GM12878 (cell line): ENCODE measurements at regions of chr20 and their contacts with region 1.

Region 1: GRCh38 chr20:53750827-53751619 is 157.4 kb upstream of the ZNF217 start:
- DNase-seq: peak; percentile 69
- ATAC-seq: peak; percentile 83
- H3K4me3 ChIP-seq: peak overlapping the region; percentile 2; the same call in 1 of the 2 replicates
- H3K27ac ChIP-seq: peak overlapping the region; percentile 99
- H3K4me1 ChIP-seq: peaks cover 64% of the 10 kb centered on the region
- H3K27me3 ChIP-seq: no peaks in the 10 kb centered on the region
- CTCF ChIP-seq: no peak
- EP300 ChIP-seq: peak; percentile 56 to 89; a peak in 3 of 4 replicates
- POLR2A ChIP-seq: peak; percentile 45; the same call in 1 of the 2 replicates
- RAD21 ChIP-seq: peak; percentile 47

Region 2: DNA sequence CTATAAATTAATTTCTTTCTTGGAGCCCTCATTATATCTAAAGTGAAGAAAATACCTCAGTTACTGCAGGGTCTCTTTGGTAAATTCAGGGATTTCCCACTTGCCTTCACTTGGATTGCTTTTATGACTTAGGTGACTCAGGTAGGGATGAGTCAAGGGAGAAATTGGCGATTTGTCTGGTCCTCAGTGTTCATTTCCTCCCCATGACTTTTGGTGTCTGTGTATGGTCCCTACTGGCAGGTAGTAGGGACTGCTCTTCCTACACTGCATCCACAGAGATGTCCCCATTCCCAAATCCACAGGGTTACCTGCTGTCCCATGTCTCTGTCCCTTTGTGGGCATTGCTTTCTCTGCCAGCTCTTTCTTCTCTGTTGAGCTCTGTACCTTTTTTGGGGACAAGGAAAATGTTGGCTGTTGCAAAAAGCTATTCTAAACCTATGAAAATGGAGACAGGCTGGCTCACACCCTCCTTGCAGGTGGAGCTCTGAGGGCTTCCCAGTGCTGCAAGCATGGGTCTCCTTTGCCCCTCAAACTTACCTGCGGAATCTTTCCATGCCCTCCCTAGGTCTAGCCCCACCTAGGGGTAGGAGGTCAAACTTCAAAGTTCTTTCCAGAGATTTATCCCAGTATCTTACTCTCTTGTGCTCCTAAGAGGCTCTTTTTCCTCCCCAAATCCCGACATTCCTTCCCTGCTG is 369.3 kb before region 1 on chr20:
- CTCF ChIA-PET with region 1: no interaction called
- POLR2A ChIA-PET with region 1: no interaction called
- RAD21 ChIA-PET with region 1: no interaction called
- SMC1A ChIA-PET with region 1: no interaction called
- in situ Hi-C with region 1: no loop called
- intact Hi-C with region 1: no loop called
- DNase-seq: no peak
- ATAC-seq: no peak
- H3K4me3 ChIP-seq: no peak overlapping the region
- H3K27ac ChIP-seq: no peak overlapping the region
- H3K4me1 ChIP-seq: no peaks in the 10 kb centered on the region
- H3K27me3 ChIP-seq: no peaks in the 10 kb centered on the region
- CTCF ChIP-seq: 0 out of 6 replicates have a peak, but pooled peaks of 1 of the 3 experiments have one; percentile 14
- EP300 ChIP-seq: no peak
- POLR2A ChIP-seq: no peak
- RAD21 ChIP-seq: no peak

Region 3: DNA sequence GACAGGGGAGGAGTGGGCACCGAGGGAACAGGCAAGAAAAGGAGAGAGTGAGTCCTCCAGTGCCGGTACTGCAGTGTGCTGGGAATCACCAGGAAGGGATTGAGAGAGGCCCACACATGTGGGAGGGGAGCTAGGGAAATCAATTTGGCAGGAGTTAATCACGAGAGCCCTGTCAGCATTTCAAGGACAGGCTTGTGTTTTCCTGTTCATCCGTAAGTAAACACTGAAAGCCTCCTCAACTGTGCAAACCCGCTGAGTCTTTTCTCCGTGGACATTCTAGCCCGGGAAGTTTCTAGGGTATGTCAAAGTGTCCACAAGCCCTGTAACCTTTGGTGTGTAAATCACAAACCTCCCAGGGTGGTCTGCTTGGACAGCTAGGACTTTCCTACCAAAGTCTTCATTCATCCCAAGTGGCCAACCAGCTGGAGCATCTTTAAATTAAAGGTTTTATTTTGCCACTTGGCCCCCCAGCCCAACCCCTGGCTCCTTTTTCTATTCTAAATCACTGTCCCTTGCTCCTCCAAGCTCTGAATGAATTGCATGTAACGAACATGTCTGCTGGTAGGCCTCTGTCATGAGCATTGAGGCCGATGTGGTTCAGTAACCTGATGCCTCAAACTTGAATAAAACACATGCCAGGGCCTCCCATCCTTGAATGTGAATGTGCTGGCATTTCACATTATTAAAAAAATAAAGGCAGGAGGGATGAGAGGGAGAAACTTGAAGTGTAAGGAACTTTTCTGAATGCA is 306.4 kb before region 1 on chr20:
- CTCF ChIA-PET with region 1: no interaction called
- POLR2A ChIA-PET with region 1: no interaction called
- RAD21 ChIA-PET with region 1: no interaction called
- SMC1A ChIA-PET with region 1: no interaction called
- in situ Hi-C with region 1: no loop called
- intact Hi-C with region 1: no loop called
- DNase-seq: no peak
- ATAC-seq: no peak
- H3K4me3 ChIP-seq: no peak overlapping the region
- H3K27ac ChIP-seq: no peak overlapping the region
- H3K4me1 ChIP-seq: no peaks in the 10 kb centered on the region
- H3K27me3 ChIP-seq: no peaks in the 10 kb centered on the region
- CTCF ChIP-seq: no peak
- EP300 ChIP-seq: no peak
- POLR2A ChIP-seq: no peak
- RAD21 ChIP-seq: no peak

Region 4: GRCh38 chr20:53652090-53652858 is 98.7 kb before region 1 on chr20:
- CTCF ChIA-PET with region 1: interaction called, 4 read pairs
- POLR2A ChIA-PET with region 1: no interaction called
- RAD21 ChIA-PET with region 1: interaction called, 15 read pairs
- SMC1A ChIA-PET with region 1: interaction called, 59 read pairs
- in situ Hi-C with region 1: no loop called
- intact Hi-C with region 1: no loop called
- DNase-seq: peak; percentile 93
- ATAC-seq: peak; percentile 76
- H3K4me3 ChIP-seq: peak overlapping the region; percentile 30; the same call in 1 of the 2 replicates
- H3K27ac ChIP-seq: peak overlapping the region; percentile 99
- H3K4me1 ChIP-seq: peaks cover 39% of the 10 kb centered on the region
- H3K27me3 ChIP-seq: no peaks in the 10 kb centered on the region
- CTCF ChIP-seq: no peak
- EP300 ChIP-seq: peak; percentile 68 to 72; a peak in 2 of 4 replicates
- POLR2A ChIP-seq: no peak
- RAD21 ChIP-seq: peak; percentile 17; the same call in 1 of the 2 replicates

Region 5: DNA sequence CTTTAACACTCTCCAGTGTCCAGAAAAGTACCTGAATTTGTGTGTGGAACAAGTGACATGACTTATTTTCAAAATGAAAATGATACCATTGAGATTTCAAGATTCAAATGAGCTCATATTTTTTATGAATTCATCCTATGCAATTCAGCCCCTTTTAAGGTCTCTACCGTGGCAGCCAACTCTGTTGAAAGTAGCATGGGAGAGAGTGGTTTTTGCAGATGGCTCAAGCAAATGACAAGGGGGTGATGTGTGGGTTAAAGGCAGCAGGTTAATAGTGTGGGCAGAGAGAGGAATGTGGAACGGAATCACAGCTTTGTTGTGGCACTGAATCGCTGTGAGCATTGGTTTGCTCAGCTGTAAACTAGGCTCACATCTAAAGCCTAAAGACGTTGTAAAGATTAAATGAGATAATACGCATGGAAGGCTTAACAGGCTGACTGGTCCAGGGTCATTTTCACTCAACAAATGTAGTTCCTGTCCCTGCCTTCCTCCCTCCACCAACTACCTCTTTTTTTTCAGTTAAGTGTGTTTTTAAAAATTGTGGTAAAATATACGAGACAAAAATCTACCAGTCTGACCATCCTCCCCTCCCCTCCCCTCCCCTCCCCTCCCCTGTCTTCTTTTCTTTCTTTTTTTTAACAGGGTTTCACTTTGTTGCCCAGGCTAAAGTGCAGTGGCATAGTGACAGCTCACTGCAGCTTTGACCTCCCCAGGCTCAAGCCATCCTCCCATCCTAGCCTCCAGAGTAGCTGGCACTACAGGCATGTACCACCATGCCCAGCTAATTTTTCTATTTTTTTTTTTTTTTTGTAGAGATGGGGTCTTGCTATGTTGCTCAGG is 42.7 kb before region 1 on chr20:
- CTCF ChIA-PET with region 1: interaction called, 3 read pairs
- POLR2A ChIA-PET with region 1: interaction called, 6 read pairs
- RAD21 ChIA-PET with region 1: interaction called, 14 read pairs
- SMC1A ChIA-PET with region 1: interaction called, 14 read pairs
- in situ Hi-C with region 1: no loop called
- intact Hi-C with region 1: loop called (anchors 5 kb)
- DNase-seq: peak; percentile 94
- ATAC-seq: peak; percentile 83
- H3K4me3 ChIP-seq: peak overlapping the region; percentile 43; the same call in 1 of the 2 replicates
- H3K27ac ChIP-seq: peak overlapping the region; percentile 97
- H3K4me1 ChIP-seq: peaks cover 45% of the 10 kb centered on the region
- H3K27me3 ChIP-seq: no peaks in the 10 kb centered on the region
- CTCF ChIP-seq: no peak
- EP300 ChIP-seq: peak in 1 of 2 experiments; percentile 35; a peak in 3 of 4 replicates
- POLR2A ChIP-seq: peak; percentile 36
- RAD21 ChIP-seq: 0 out of 2 replicates have a peak, but pooled peaks have one; percentile 6

Region 6: DNA sequence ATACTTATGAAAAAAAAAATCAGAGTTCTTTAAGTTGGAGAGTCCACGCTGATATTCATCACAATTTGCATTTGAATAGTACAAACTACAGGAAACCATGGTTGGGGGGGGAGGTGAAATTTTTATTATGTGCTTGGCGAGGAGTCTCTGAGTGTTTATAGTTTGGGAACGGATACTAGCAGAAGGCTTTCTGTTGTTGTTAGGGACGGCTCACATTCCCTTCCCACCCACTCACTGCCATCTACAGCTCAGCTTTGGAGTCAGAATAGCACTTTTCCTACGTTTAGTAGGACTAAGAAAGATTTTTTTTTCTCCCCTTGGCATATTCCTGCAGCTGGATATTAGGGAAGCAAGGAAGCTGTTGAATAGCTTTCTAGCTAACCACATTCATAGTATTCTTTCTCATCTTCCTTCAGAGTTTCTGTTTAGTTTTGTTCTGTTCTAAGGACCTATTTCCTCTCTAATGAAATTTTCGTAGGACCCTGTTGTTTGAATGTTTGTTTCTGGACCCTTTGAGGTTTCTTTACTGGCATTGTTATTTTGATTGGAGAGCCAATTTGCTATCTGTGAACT is 77.7 kb after region 1 on chr20:
- CTCF ChIA-PET with region 1: interaction called, 5 read pairs
- POLR2A ChIA-PET with region 1: interaction called, 6 read pairs
- RAD21 ChIA-PET with region 1: interaction called, 26 read pairs
- SMC1A ChIA-PET with region 1: interaction called, 23 read pairs
- in situ Hi-C with region 1: no loop called
- intact Hi-C with region 1: no loop called
- DNase-seq: no peak
- ATAC-seq: peak; percentile 2; the same call in 2 of the 3 replicates
- H3K4me3 ChIP-seq: peak overlapping the region; percentile 56
- H3K27ac ChIP-seq: peak overlapping the region; percentile 91
- H3K4me1 ChIP-seq: peaks cover 37% of the 10 kb centered on the region
- H3K27me3 ChIP-seq: no peaks in the 10 kb centered on the region
- CTCF ChIP-seq: 0 out of 6 replicates have a peak, but pooled peaks of 1 of the 3 experiments have one; percentile 4
- EP300 ChIP-seq: no peak
- POLR2A ChIP-seq: no peak
- RAD21 ChIP-seq: 0 out of 2 replicates have a peak, but pooled peaks have one; percentile 1

Region 7: GRCh38 chr20:53899351-53900167 is 148.5 kb after region 1 on chr20:
- CTCF ChIA-PET with region 1: interaction called, 6 read pairs
- POLR2A ChIA-PET with region 1: interaction called, 3 read pairs
- RAD21 ChIA-PET with region 1: interaction called, 7 read pairs
- SMC1A ChIA-PET with region 1: interaction called, 12 read pairs
- in situ Hi-C with region 1: no loop called
- intact Hi-C with region 1: no loop called
- DNase-seq: peak; percentile 95
- ATAC-seq: peak; percentile 88
- H3K4me3 ChIP-seq: no peak overlapping the region
- H3K27ac ChIP-seq: peak overlapping the region; percentile 62
- H3K4me1 ChIP-seq: peaks cover 39% of the 10 kb centered on the region
- H3K27me3 ChIP-seq: no peaks in the 10 kb centered on the region
- CTCF ChIP-seq: no peak
- EP300 ChIP-seq: peak in 1 of 2 experiments; percentile 74; a peak in 2 of 4 replicates
- POLR2A ChIP-seq: no peak
- RAD21 ChIP-seq: no peak